ENCODE measurements at regions of chr9 and their contacts with region 1.

Region 1: GRCh38 chr9:38088006-38088925 is 19.2 kb upstream of the SHB start:
- DNase-seq: peak; percentile 51 to 94 (median 86)

Region 2: DNA sequence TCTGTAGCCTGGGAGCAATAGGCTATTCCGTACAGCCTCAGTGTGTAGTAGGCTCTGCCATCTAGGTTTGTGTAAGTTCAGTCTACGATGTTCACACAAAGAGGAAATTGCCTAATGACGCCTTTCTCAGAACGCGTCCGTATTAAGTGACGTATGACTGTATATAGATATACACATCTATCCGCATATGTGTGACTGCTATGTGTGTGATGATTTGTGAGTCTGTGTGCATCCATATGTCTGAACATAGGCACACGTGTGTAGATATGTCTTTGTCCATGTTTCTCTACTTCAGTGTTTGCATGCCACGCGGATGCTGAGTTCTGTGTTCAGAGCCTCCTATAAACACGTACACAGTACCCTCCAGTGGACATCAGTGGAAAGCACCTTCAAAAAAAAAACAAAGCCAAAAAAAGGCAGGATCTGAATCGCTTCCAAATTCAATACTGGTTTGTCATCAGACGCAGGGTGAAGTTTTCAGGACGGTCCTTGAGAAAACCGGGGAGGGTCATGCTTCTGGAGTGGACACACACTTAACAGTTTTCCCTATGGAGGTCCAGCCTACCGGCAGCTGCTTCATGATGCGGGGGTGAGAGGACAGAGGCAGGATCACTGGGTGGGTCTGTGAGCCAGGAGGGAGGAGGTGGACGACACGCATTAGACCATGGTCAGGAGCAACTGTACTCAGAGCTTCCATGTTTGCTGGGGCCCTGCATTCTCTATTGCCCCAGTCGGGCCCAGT is 274.8 kb after region 1 on chr9:
- intact Hi-C with region 1: loop called (anchors 10 kb)
- DNase-seq: peak in 30 of 42 donors; percentile 7 to 70 (median 39)

Measured in head of caudate nucleus (tissue), 42 donors.